Activated CD4-positive, alpha-beta T cell treated with anti-CD3 and anti-CD28 coated beads for 36 hours (primary cell): ENCODE measurements at regions of chr17 and their contacts with region 1.

Region 1: GRCh38 chr17:8156246-8156992 is 4.2 kb upstream of the PER1 start:
- DNase-seq: peak; percentile 100
- ATAC-seq: peak; percentile 75
- H3K4me3 Mint-ChIP-seq: no peak overlapping the region
- H3K27ac Mint-ChIP-seq: no peak overlapping the region
- H3K4me1 Mint-ChIP-seq: peaks cover 49% of the 10 kb centered on the region
- H3K27me3 Mint-ChIP-seq: no peaks in the 10 kb centered on the region

Region 2: DNA sequence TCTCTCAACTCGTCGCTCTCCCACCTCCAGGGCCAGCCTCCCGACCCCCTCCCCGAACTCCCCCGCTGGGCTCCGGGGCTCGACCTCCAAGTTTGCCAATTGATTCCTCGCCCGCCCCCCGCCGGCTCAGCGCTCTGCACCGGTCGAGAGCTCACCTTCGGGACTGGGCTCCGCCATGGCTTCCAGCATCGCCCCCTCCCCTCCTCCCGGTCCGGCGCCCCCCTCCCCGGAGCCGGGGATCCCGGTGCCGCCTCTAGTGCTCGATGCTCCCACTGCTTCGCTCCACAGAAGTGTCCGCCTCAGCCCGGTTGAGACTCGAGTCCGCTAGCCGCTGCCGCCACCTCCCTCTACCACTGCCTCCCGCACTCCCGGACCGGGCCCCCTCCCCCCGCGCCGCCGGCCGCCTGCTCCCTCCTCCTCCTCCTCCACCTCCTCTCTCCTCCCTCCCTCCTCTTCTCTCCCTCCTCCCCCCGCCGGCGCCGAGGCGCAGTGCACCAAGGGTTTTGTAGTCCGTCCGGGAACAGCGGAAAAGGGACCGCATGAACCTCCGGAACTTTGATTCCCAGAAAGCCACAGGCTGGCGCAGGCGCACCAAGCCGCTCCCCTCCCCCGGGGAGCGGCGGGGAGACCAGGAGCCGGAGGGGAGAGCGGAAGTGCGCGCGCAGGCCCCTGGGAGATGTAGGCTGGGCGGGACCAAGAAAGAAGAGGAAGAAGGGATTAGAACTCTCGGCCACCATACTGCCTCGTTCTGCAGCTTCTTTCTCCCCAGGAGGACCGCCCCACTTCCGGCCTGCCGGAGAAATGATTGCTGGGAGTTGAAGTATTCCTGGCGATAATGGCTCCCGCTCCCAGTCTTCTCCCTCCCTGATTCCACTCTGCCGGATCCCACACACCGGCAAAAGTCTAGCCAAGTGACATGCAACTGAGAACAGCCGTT is 917.1 kb before region 1 on chr17 and contains the start of gene PHF23:
- CTCF ChIA-PET with region 1: no interaction called
- POLR2A ChIA-PET with region 1: no interaction called
- intact Hi-C with region 1: loop called in 1 of 2 experiments (anchors 10 kb)
- DNase-seq: peak; percentile 99
- ATAC-seq: peak; percentile 74
- H3K4me3 Mint-ChIP-seq: peak within 1 kb of the TSS; percentile 97
- H3K27ac Mint-ChIP-seq: peak within 1 kb of the TSS; percentile 93
- H3K4me1 Mint-ChIP-seq: peaks cover 61% of the 10 kb centered on the region
- H3K27me3 Mint-ChIP-seq: no peaks in the 10 kb centered on the region
- total RNA-seq, gene PHF23: 23.6 to 35.2 TPM

Region 3: DNA sequence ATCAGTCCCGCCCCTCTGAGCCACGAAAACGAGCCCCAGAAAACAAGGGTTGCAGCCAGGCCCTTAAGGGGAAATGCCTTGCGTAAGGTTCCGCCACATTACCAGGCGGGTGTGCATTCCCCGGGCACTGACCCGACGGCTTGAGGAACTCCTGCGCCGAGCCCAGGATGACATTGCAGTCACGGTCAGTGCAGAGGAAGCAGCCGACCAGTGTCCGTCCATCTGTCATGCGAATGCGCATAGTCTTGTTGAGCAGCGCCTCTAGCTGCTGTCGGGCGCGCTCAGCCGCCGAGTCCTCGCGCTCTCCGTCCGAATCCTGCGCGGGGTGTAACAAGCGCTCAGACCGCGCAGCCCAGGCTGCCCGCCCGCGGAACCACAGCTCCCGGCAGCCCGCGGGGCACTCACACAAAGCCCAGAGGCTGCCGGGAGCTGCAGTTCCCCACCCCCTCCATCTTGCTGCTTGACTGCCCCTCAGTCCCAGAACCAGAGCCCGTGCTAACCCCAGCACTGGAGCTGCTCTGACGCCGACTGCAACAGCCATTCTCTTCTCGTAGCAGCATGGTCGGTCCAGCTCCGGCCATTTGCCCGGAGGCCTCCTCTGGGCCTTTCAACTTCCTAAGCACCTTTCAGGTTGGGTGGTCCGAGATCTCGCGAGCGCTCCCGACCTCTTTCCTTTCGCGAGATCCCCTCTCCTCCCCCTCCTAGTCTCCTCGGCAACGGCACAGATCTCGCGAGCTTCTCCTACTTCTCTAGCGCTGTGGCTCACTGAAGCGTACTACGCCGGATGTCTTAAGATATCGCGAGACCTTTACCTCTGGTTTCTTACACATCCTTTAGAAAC is 299.3 kb before region 1 on chr17 and contains the start of gene NAA38:
- CTCF ChIA-PET with region 1: no interaction called
- POLR2A ChIA-PET with region 1: no interaction called
- intact Hi-C with region 1: loop called in 1 of 2 experiments (anchors 1 kb)
- DNase-seq: peak; percentile 97
- ATAC-seq: peak; percentile 91
- H3K4me3 Mint-ChIP-seq: no peak within 1 kb of the TSS
- H3K27ac Mint-ChIP-seq: no peak within 1 kb of the TSS
- H3K4me1 Mint-ChIP-seq: peaks cover 18% of the 10 kb centered on the region
- H3K27me3 Mint-ChIP-seq: no peaks in the 10 kb centered on the region
- total RNA-seq, gene NAA38: 64.7 to 79.8 TPM

Region 4: DNA sequence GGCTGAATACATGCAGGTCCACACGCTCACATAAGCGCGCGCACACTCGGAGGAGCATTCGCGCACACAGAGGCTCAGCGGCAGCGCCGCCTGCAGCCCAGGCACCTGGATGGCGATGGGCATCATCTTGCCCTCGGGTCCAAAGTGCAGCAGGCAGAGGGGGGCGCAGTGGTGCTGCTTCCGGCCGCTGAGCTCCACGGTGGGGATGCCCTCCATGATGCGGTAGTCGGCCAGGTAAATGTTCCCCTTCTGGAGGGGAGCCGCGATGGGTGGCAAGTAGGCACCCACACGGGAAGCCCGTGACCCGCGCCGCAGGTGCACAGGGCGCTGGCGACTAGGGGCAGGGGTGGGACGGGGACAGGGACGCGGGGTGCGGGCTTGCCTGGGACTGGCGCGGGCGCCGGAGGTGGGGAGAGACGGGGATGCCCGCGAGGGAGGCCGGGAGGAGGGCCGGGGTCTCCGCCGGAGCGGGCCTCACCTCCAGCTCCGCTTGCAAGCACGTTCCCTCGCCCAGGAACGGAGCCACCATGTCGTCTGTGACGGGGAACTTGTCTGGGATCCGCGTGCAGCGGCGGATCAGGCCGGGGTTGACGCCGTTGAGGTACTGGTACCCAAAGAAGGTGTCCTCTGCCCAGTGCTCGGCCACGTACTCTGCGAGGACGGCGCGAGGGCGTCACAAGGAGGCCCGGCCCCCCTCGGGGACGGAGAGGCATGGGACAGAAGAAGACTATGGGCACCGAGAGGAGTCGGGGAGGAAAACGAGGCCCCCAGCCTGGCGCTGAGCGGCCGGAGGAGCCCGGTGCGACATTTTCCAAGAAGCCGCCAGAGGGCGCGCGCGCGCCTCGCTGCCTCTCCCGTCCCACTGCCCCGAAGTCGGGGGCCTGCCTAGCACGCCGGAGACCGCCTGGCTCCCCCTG is 76.9 kb before region 1 on chr17:
- CTCF ChIA-PET with region 1: interaction called, 5 read pairs
- POLR2A ChIA-PET with region 1: no interaction called
- intact Hi-C with region 1: loop called in 1 of 2 experiments (anchors 5 kb)
- DNase-seq: peak; percentile 92
- ATAC-seq: peak; percentile 94
- H3K4me3 Mint-ChIP-seq: peak overlapping the region; percentile 94
- H3K27ac Mint-ChIP-seq: peak overlapping the region; percentile 92
- H3K4me1 Mint-ChIP-seq: peaks cover 12% of the 10 kb centered on the region
- H3K27me3 Mint-ChIP-seq: peaks cover 5% of the 10 kb centered on the region

Region 5: GRCh38 chr17:8138672-8139371 is 17.6 kb before region 1 on chr17:
- CTCF ChIA-PET with region 1: interaction called, 36 read pairs
- POLR2A ChIA-PET with region 1: interaction called, 14 read pairs
- intact Hi-C with region 1: loop called (anchors 1 kb)
- DNase-seq: peak; percentile 98
- ATAC-seq: peak; percentile 90
- H3K4me3 Mint-ChIP-seq: no peak overlapping the region
- H3K27ac Mint-ChIP-seq: no peak overlapping the region
- H3K4me1 Mint-ChIP-seq: no peaks in the 10 kb centered on the region
- H3K27me3 Mint-ChIP-seq: no peaks in the 10 kb centered on the region

Region 6: DNA sequence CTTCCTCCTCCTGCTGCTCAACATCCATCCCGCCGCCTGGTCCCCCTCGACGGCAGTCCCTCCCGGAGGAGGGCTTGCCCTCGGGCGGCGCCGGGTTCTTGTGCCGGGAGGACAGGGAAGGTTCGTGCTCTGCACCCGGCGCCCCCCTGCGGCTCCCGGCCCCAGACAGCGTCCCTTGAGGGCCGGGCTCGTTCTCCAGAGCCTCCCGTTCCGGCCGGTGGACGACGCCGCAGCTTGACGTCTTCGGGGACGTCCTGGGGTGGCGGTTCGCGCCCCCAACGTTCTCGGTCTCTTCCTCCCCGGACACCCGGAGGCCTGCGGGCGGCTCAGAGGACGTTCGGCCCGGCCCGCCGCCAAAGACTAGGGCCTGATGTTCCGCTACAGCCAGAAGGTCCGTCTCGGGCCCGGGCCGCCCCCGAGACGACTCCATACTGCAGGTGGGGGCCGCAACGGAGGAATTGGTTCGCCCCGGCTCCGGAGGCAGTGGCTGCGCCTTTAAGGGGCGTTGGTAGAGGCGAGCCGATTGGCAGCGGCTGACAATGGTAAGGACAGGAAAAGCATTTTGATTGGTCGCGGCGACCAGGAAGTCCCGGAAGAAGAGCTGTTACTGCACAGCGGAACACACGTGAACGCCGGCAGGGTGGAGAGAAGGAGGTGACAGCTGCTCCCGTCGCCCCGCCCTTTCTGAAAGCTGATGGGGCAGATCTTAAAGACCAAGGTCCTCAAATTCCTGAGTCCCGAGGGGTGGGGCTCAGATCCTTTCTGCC is 33.5 kb after region 1 on chr17 and contains the start of gene BORCS6:
- CTCF ChIA-PET with region 1: interaction called, 4 read pairs
- POLR2A ChIA-PET with region 1: interaction called, 5 read pairs
- intact Hi-C with region 1: loop called (anchors 1 to 2 kb)
- DNase-seq: peak; percentile 98
- ATAC-seq: peak; percentile 67
- H3K4me3 Mint-ChIP-seq: no peak within 1 kb of the TSS
- H3K27ac Mint-ChIP-seq: peak within 1 kb of the TSS; percentile 86
- H3K4me1 Mint-ChIP-seq: peaks cover 10% of the 10 kb centered on the region
- H3K27me3 Mint-ChIP-seq: no peaks in the 10 kb centered on the region
- total RNA-seq, gene BORCS6: 3.9 to 4.5 TPM